Lower leg skin (tissue), 4 donors: ENCODE measurements at regions of chr10 and their contacts with region 1.

Region 1: DNA sequence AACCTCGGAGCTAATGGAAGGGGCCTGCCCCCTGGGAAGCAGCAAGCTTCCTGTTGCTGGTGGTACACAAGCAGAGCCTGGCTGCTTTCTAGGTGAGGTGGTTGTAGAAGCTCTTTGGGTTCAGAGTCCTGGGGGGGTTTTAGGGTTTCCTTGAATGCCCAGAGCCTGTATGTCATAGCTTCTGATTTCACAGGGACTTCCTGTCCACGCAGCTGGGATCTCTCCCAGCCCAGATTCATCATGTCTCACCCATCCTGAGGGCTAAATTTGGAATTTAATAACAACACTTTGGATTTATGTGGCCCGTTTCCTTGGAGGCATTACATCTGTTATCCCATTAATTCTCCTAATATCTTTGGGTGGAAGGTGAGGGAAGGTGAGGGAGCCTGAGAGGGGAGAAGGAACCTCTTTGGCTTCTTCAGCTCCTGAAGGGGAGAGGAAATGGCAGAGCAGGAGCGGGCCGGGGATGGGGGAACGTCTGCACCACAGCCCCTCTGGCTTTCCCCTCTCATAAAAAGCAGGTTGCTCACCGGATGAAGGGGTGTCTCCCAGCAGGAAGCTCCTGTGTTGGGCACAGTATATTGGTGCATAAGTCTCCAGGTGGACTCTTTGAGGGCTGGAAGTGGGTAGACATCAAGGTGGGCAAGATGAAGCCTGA is 19.7 kb downstream of the RPS24 start:
- DNase-seq: no peak
- H3K4me3 ChIP-seq: no peak overlapping the region
- CTCF ChIP-seq: no peak
- POLR2A ChIP-seq: no peak

Region 2: GRCh38 chr10:78015546-78015945 is 37.8 kb before region 1 on chr10:
- intact Hi-C with region 1: no loop called
- DNase-seq: no peak
- H3K4me3 ChIP-seq: no peak overlapping the region
- CTCF ChIP-seq: no peak
- POLR2A ChIP-seq: no peak

Region 3: DNA sequence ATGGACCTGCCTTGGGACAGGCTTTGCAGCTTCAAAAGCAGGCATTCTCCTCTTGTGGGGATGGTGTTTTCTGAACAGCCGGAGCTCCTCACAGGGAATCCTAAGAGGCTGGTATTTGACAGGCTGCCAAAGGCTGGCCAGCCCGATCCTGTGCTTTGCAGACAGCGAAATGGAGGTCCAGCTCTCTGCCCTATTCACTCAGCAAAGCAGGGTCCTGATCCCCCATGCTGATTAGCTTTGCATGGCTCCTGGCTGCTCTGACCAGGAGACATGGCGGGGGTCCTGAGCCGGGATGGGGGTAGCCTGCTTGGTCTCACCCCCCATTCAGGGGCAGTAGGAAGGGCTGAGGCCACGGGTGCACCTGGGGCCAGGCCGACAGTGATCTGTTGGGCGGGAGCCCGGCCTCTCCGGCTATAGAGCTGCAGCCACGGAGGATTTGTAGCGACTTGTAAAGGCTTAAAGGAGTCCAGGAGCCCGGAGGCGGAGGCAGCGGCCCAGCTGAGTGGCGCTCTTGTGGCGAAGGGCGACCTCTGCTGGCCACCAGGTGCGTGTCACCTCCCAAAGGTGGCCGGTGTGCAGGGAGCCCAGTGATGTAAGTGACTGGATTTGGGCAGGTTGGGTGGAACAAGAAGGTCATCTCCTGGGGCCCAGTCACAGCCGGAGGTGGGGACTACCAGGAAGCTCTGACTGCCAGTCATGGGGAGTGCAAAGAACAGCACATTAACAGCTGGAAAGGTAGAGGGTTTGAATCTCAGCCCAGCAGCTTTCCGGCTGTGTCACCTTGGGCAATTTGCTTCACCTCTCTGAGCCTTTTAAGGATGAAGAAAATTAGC is 1142.0 kb after region 1 on chr10:
- intact Hi-C with region 1: loop called (anchors 5 kb)
- DNase-seq: peak; percentile 84 to 97
- H3K4me3 ChIP-seq: no peak overlapping the region
- CTCF ChIP-seq: peak in 2 of 3 donors; percentile 32 to 83
- POLR2A ChIP-seq: no peak